Prostate gland (tissue), 2 donors: ENCODE measurements at regions of chr1 and their contacts with region 1.

Region 1: GRCh38 chr1:8026153-8026975 is at the start of gene ERRFI1:
- DNase-seq: peak; percentile 93
- H3K4me3 ChIP-seq: peak within 1 kb of the TSS; percentile 88 to 94
- H3K27ac ChIP-seq: peak within 1 kb of the TSS; percentile 81 to 94
- H3K4me1 ChIP-seq: peaks cover 5% of the 10 kb centered on the region
- H3K27me3 ChIP-seq: no peaks in the 10 kb centered on the region
- CTCF ChIP-seq: peak in 2 of 4 experiments; percentile 39 to 49
- POLR2A ChIP-seq: peak; percentile 100
- total RNA-seq, gene ERRFI1: 58.1 to 60.4 TPM

Region 2: DNA sequence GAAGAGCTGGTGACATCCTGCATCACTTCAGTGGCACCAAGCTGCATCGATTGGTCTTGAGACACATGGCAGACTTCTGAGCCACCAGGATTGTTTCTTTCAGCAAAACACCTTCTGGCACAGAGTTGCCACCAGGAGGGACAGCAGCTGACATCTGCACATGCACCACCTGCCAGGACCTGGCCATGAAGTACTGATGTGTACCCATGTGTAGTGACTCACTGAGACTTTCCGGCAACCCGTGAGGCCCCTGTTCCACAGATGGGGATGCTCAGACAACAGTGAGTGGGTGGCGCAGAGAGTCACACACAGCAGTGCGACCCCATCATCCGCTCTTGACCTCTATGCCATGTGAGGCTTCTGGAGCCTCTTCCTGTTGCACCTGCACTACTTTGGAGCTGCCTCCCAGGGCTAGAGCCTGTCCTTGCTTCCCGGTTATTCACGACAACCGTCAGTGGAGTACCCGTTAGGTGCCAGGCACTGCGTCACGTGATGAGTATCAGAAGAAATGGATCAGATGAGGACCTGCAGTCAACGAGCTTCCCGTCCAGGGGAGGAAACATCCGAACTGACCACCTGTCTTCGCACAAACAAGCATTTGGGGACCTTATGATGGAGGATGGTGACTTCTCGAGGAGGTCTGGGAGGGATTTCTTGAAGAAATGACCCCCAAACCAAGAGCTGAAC is 335.7 kb before region 1 on chr1:
- intact Hi-C with region 1: no loop called
- DNase-seq: no peak
- H3K4me3 ChIP-seq: no peak overlapping the region
- H3K27ac ChIP-seq: no peak overlapping the region
- H3K4me1 ChIP-seq: no peaks in the 10 kb centered on the region
- H3K27me3 ChIP-seq: no peaks in the 10 kb centered on the region
- CTCF ChIP-seq: no peak
- POLR2A ChIP-seq: no peak

Region 3: GRCh38 chr1:7885513-7886404 is 140.6 kb before region 1 on chr1:
- intact Hi-C with region 1: no loop called
- DNase-seq: no peak
- H3K4me3 ChIP-seq: no peak overlapping the region
- H3K27ac ChIP-seq: no peak overlapping the region
- H3K4me1 ChIP-seq: no peaks in the 10 kb centered on the region
- H3K27me3 ChIP-seq: no peaks in the 10 kb centered on the region
- CTCF ChIP-seq: no peak
- POLR2A ChIP-seq: no peak

Region 4: GRCh38 chr1:8077120-8077573 is 50.8 kb after region 1 on chr1:
- intact Hi-C with region 1: loop called (anchors 5 kb)
- DNase-seq: peak; percentile 48
- H3K4me3 ChIP-seq: no peak overlapping the region
- H3K27ac ChIP-seq: peak overlapping the region; percentile 77 to 85
- H3K4me1 ChIP-seq: peaks cover 9% of the 10 kb centered on the region
- H3K27me3 ChIP-seq: no peaks in the 10 kb centered on the region
- CTCF ChIP-seq: peak in 1 of 4 experiments; percentile 14
- POLR2A ChIP-seq: no peak

Region 5: DNA sequence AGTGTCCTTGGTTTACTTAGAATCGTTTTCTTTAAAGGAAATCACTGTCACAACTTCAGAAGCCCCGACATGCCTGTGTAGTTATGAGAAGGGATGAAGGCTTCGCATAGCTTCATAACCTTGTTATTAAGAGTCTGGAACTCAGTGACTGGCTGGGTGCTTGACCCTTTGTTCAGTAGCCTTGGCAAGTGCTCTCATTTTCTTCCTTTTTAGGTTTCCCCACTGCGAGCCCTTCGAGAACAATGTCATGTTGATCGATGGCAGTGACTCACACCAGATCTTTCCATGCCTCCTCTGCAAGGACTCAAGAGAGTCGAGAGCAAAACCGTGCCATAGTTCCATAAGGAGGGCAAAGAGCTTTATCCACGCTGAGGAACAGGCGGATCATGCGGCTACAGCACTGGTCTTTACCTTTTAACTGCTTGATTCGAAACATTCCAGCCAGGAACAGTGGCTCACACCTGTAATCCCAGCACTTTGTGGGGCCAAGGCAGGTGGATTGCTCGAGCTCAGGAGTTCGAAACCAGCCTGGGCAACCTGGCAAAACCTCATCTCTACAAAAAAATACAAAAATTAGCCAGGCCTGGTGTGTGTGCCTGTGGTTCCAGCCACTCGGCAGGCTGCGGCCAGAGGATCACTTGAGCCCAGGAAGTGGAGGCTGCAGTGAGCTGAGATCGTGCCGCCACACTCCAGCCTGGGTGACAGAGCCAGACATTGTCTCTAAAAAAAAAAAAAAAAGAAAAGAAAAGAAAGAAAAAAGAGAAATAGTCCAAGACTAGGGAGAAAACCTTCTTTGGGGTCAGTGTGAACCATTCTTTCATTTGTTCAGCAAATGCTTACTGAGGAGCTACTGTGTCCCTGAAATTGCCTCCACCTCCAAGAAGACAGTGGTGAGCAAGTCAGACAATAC is 95.2 kb after region 1 on chr1:
- intact Hi-C with region 1: loop called (anchors 5 kb)
- DNase-seq: peak; percentile 78
- H3K4me3 ChIP-seq: no peak overlapping the region
- H3K27ac ChIP-seq: peak overlapping the region; percentile 80 to 81
- H3K4me1 ChIP-seq: no peaks in the 10 kb centered on the region
- H3K27me3 ChIP-seq: no peaks in the 10 kb centered on the region
- CTCF ChIP-seq: no peak
- POLR2A ChIP-seq: no peak

Region 6: DNA sequence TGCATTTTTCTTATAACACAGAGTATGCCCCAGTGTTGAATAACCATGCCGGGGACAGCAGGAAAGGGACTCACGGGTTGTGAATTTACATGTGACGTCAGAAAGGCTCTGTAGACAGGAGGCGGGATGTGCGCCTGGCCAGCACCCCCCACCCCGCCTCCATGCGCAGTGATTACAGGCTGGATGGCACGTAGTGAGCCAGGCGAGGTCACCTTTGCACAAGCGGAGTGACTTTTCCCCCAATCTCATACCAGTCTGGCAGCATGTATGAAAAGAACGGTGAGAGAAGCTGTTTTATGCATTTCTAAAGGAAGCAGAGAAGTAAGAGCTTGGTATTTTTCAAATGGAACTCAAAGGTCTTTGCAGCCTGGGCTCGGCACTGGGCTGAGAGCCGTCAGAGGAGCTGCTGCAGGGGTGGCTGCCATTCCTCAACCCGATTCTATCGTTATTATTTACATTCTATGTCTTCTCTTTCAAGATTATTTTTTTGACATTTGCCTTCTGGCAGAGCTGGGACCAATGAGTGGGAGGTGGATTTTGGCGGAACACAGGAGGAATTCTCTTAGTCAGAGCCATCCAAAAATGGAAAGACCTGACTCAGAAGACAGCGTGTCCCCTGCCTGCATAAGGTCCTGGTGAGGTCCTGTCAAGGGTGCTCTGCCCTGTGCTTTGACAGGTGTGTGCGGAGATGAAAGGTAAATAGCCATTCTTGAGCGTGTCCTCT is 176.0 kb after region 1 on chr1:
- intact Hi-C with region 1: loop called (anchors 5 kb)
- DNase-seq: peak; percentile 75
- H3K4me3 ChIP-seq: no peak overlapping the region
- H3K27ac ChIP-seq: peak overlapping the region; percentile 85 to 88
- H3K4me1 ChIP-seq: peaks cover 19% of the 10 kb centered on the region
- H3K27me3 ChIP-seq: no peaks in the 10 kb centered on the region
- CTCF ChIP-seq: peak in 1 of 4 experiments; percentile 13
- POLR2A ChIP-seq: peak; percentile 18

Region 7: GRCh38 chr1:8217011-8217711 is 190.8 kb after region 1 on chr1:
- intact Hi-C with region 1: loop called (anchors 5 kb)
- DNase-seq: no peak
- H3K4me3 ChIP-seq: peak overlapping the region; percentile 26 to 36
- H3K27ac ChIP-seq: peak overlapping the region; percentile 54 to 64
- H3K4me1 ChIP-seq: no peaks in the 10 kb centered on the region
- H3K27me3 ChIP-seq: no peaks in the 10 kb centered on the region
- CTCF ChIP-seq: peak in 1 of 4 experiments; percentile 17
- POLR2A ChIP-seq: peak; percentile 8

Region 8: GRCh38 chr1:8238851-8239305 is 212.5 kb after region 1 on chr1:
- intact Hi-C with region 1: loop called (anchors 5 kb)
- DNase-seq: no peak
- H3K4me3 ChIP-seq: no peak overlapping the region
- H3K27ac ChIP-seq: peak overlapping the region; percentile 47 to 48
- H3K4me1 ChIP-seq: peaks cover 2% of the 10 kb centered on the region
- H3K27me3 ChIP-seq: no peaks in the 10 kb centered on the region
- CTCF ChIP-seq: peak in 3 of 4 experiments; percentile 10 to 35 (median 19)
- POLR2A ChIP-seq: no peak

Region 9: DNA sequence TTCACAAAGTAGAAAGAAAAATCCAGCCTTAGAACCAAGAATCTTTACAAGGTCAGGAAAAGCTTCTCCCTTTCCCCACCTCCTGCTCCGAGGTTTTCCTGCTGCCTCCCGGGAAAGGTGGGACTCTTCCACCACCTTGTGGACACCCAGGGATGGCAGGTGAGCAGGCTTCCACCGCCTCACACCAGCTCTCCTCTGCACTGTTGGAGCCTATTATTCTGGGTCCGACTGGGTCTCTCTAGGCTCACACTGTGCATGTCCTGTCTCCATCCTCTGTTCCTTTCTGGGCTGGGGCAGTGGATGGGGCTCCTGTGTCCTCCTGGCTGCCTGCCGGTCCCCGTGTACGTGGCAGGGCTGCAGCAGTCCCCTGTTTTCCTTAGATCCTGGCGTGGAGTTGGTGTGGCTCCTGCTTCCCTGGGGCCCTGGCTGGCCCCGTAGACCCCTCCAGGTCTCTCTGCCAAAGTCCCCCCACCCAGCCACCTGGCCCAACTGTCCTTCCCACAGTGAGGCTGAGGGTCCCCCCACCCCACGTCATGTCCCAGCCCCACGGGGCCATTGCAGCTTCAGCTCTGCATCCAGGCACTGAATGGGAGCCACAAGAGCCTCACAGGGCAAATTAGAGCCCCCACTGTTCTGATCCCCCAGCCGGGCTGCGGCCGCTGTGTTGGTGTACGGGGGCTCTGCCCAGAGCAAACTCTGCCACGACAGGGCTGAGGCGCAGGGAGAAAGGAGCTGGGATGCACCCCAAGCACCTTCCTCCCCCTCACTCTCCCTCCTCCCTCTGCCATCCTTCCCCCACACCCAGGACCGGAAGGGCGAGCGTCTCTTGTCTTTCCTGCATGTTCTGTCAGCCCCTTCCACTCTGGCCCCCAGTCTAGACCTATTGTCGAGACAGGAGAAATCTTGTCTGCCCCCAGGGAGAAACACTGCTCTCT is 288.2 kb after region 1 on chr1:
- intact Hi-C with region 1: loop called (anchors 5 kb)
- DNase-seq: peak; percentile 86
- H3K4me3 ChIP-seq: no peak overlapping the region
- H3K27ac ChIP-seq: peak overlapping the region in 1 of 2 donors; percentile 78
- H3K4me1 ChIP-seq: peaks cover 12% of the 10 kb centered on the region
- H3K27me3 ChIP-seq: no peaks in the 10 kb centered on the region
- CTCF ChIP-seq: peak; percentile 81 to 99 (median 96)
- POLR2A ChIP-seq: no peak